ENCODE measurements at regions of chr1 and their contacts with region 1.

Region 1: DNA sequence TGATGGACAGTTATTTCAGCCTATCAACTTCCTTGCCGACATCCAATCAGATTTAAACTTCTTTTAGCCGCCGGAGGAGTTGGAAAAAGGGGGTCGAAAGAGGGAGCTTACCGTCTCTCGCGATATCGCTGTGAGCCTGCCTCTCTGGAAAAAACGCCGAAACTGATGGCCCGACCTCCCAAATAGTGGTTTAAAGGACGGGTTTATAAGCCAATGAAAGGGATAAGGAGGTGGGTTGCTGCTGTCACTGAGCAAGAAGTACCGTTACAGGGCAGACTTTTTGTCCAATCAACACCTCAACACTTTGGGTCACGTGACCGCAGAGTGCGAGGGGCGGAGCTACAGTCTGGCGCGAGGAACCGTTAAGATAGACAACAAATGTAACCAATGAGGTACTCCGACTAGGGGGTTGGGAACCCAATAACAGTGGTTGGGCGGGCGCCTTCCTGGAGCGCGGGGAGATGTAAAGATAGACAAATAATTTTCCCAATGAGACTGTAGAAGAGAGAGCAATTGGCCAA is at the start of gene RBM15:
- DNase-seq: peak; percentile 96
- CTCF ChIP-seq: no peak

Region 2: GRCh38 chr1:110196917-110197765 is 141.8 kb before region 1 on chr1:
- CTCF ChIA-PET with region 1: interaction called, 35 read pairs
- POLR2A ChIA-PET with region 1: no interaction called
- DNase-seq: peak; percentile 88
- CTCF ChIP-seq: peak; percentile 95

Region 3: DNA sequence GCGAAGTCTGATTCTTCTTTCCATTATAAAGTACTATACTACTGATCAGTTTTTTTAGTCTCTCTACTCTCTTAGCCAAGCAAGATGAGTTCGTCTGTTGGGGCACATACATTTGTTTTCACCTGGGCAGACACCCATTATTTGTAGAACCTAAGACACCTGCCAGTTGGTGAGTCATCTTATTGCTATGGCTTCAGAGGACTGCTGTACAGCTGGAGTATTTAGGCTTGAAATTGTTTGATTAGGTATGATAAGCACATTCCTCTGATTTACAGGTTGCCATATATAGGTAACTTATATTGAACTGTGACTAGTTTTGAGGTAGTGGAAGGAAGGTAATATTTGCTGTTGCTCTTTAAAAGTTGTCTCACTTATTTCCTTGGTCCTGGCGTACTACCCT is 17.5 kb after region 1 on chr1:
- CTCF ChIA-PET with region 1: interaction called, 16 read pairs
- POLR2A ChIA-PET with region 1: interaction called, 3 read pairs
- DNase-seq: no peak
- CTCF ChIP-seq: no peak

Region 4: GRCh38 chr1:110393691-110394564 is 55.0 kb after region 1 on chr1:
- CTCF ChIA-PET with region 1: interaction called, 5 read pairs
- POLR2A ChIA-PET with region 1: interaction called, 11 read pairs
- DNase-seq: no peak
- CTCF ChIP-seq: no peak

Region 5: DNA sequence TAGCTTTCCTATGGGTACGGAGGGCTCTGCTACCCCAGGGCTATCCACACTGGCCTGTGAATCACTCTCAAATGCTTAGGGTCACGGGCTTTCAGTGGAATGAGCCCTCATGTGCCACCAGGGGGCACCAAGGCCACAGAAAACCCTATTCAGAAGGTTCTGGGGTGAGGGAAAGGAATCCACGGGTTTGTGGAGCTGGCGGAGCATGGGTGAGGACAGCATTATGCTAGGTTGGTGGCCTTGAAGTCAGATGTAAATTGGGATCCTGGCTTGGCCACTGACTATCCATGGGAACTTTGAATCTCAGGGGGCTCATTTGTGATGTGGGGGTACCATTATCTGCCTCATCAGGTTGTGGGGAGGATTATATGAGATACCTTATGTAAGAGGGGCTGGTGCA is 73.6 kb after region 1 on chr1:
- CTCF ChIA-PET with region 1: interaction called, 17 read pairs
- POLR2A ChIA-PET with region 1: interaction called, 3 read pairs
- DNase-seq: peak; percentile 64
- CTCF ChIP-seq: peak; percentile 64

Region 6: GRCh38 chr1:110630839-110631663 is 292.1 kb after region 1 on chr1:
- CTCF ChIA-PET with region 1: no interaction called
- POLR2A ChIA-PET with region 1: no interaction called
- DNase-seq: peak; percentile 67
- CTCF ChIP-seq: peak; percentile 75

Measured in GM10248 (cell line).